Activated CD4-positive, alpha-beta T cell treated with anti-CD3 and anti-CD28 coated beads for 36 hours (primary cell): ENCODE measurements at regions of chr1 and their contacts with region 1.

Region 1: DNA sequence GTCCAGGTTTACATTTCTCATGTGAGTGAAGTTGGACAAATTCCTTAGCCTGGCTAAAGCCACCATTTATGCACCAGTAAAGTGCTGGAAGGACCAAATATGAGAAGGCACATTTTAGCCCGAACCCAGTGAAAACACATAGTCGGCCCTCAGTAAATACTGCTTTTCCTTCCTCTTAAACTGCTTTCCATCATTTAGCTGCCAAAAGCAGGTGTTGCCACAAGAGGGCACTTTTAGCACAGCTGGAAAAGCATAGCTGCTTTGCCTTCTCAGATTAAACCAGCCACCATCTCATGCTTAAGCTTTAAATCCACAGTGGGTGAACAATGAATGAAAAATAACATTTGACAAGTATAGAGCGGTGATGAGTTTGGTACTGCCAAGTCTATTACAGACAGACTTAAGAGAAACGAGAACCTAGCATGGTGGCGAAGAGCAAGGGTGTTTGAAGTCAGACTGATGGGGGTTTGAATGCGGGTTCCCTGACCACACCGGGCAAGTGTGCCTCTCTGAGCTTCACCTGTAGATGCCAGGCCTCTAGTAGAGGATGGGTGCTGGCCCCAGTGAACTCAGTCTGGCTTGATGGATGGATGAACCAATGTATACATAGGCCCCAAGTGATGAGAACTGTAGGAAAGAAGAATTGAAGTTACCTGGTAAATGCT is 57.8 kb downstream of the SLC35D1 start:
- DNase-seq: peak; percentile 79
- ATAC-seq: peak; percentile 79
- H3K4me3 Mint-ChIP-seq: no peak overlapping the region
- H3K27ac Mint-ChIP-seq: peak overlapping the region; percentile 53
- H3K4me1 Mint-ChIP-seq: peaks cover 16% of the 10 kb centered on the region
- H3K27me3 Mint-ChIP-seq: no peaks in the 10 kb centered on the region

Region 2: DNA sequence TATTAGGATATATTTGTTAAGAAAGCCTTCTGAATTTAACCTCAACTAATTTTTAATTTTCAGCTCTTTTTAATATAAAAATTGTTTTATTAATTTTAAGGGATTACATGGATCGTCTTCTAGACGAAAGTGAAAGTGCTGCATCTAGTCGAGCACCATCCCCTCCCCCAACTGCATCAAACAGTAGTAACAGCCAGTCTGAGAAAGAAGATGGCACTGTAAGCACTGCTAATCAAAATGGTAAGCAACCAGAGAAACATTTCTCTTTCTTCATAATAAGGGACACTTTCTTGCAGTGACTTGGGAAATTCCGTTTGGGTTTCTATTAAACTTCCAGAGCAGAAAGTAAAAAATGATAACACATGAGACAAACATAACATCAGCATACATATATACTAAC is 14.5 kb before region 1 on chr1:
- CTCF ChIA-PET with region 1: interaction called, 10 read pairs
- POLR2A ChIA-PET with region 1: no interaction called
- intact Hi-C with region 1: no loop called
- DNase-seq: peak; percentile 58
- ATAC-seq: peak; percentile 80
- H3K4me3 Mint-ChIP-seq: peak overlapping the region; percentile 14
- H3K27ac Mint-ChIP-seq: peak overlapping the region; percentile 61
- H3K4me1 Mint-ChIP-seq: peaks cover 42% of the 10 kb centered on the region
- H3K27me3 Mint-ChIP-seq: no peaks in the 10 kb centered on the region

Region 3: GRCh38 chr1:67053785-67054772 is 57.9 kb after region 1 on chr1 and contains the start of gene SLC35D1:
- CTCF ChIA-PET with region 1: interaction called, 6 read pairs
- POLR2A ChIA-PET with region 1: no interaction called
- intact Hi-C with region 1: loop called in 1 of 2 experiments (anchors 1 kb)
- DNase-seq: peak; percentile 77
- ATAC-seq: peak; percentile 79
- H3K4me3 Mint-ChIP-seq: peak within 1 kb of the TSS; percentile 79
- H3K27ac Mint-ChIP-seq: peak within 1 kb of the TSS; percentile 91
- H3K4me1 Mint-ChIP-seq: peaks cover 26% of the 10 kb centered on the region
- H3K27me3 Mint-ChIP-seq: peaks cover 5% of the 10 kb centered on the region
- total RNA-seq, gene SLC35D1: 8.7 to 10.3 TPM

Region 4: GRCh38 chr1:67149179-67149770 is 153.1 kb after region 1 on chr1:
- CTCF ChIA-PET with region 1: interaction called, 35 read pairs
- POLR2A ChIA-PET with region 1: no interaction called
- intact Hi-C with region 1: loop called (anchors 1 kb)
- DNase-seq: peak; percentile 78
- ATAC-seq: peak; percentile 90
- H3K4me3 Mint-ChIP-seq: no peak overlapping the region
- H3K27ac Mint-ChIP-seq: peak overlapping the region; percentile 64
- H3K4me1 Mint-ChIP-seq: peaks cover 34% of the 10 kb centered on the region
- H3K27me3 Mint-ChIP-seq: peaks cover 16% of the 10 kb centered on the region